Activated CD4-positive, alpha-beta T cell treated with anti-CD3 and anti-CD28 coated beads, Interleukin-2, amount 10 ng/mL, durations not matched to agents 24 days and 14 days (primary cell): ENCODE measurements at regions of chr10 and their contacts with region 1.

Region 1: GRCh38 chr10:119542988-119543813 is 682 bp upstream of the RGS10 start:
- DNase-seq: peak; percentile 89
- H3K4me3 Mint-ChIP-seq: peak overlapping the region; percentile 79
- H3K27ac Mint-ChIP-seq: peak overlapping the region; percentile 91
- H3K4me1 Mint-ChIP-seq: peaks cover 35% of the 10 kb centered on the region
- H3K27me3 Mint-ChIP-seq: peaks cover 20% of the 10 kb centered on the region

Region 2: DNA sequence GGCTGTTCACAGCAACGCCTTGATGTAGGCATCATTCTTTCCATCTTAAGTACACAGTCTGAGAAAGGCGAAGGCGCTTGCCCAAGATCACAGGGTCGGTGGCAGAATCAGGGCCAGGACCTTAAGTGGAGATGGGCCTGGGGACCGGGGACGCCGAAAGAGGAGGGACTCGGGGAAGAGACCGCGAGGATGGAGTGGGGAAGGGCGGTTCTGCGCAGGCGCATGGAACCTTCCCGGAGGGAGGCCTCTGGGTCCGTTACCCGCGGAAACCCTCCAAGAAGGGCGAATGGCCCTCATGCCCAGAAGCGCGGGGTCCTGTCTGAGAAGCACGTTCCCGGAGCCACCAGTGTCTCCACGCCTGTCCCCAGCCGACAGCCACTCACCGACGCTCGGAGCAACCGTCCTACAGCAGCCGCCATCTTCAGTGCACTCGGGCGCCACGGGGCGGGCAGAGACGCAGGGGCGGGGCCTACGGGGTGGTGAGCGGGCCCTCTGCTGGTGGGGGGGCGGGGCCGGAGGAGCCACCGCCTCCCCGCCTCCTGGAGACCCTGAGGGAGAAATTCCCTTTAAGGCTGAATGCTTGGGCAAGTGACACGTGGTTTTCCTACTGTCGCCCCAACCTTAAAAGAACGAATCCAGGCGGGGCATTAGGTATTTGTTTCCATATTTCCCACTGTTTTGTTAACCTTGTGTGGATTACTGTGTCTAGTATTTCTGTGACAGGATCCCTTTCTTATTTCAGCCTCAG is 364.7 kb before region 1 on chr10 and contains the start of gene PRDX3:
- intact Hi-C with region 1: loop called (anchors 5 kb)
- DNase-seq: peak; percentile 98
- H3K4me3 Mint-ChIP-seq: peak within 1 kb of the TSS; percentile 98
- H3K27ac Mint-ChIP-seq: peak within 1 kb of the TSS; percentile 99
- H3K4me1 Mint-ChIP-seq: peaks cover 39% of the 10 kb centered on the region
- H3K27me3 Mint-ChIP-seq: no peaks in the 10 kb centered on the region
- total RNA-seq, gene PRDX3: 179 and 180 TPM in 2 replicates

Region 3: DNA sequence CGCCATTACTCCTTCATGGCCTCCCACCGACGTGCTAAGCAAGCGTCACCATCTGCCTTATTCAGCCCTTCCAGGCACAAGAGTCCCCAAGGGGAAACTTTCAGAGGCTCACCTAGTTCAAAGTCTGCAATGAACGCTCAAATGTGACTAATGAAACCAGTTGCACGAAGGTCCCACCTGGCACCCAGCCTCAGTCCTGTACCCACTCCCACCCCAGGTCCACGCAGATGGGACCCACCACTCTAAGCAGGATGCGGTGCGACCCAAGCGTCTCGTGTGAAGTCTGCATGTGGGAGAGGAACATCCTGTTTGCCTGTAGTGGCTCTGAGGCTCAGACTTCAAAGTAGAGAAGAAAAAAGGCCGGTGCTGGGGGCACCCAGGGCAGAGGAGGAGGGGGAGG is 41.0 kb before region 1 on chr10:
- intact Hi-C with region 1: loop called (anchors 1 kb)
- DNase-seq: peak; percentile 93
- H3K4me3 Mint-ChIP-seq: peak overlapping the region; percentile 72
- H3K27ac Mint-ChIP-seq: peak overlapping the region; percentile 97
- H3K4me1 Mint-ChIP-seq: peaks cover 73% of the 10 kb centered on the region
- H3K27me3 Mint-ChIP-seq: no peaks in the 10 kb centered on the region

Region 4: DNA sequence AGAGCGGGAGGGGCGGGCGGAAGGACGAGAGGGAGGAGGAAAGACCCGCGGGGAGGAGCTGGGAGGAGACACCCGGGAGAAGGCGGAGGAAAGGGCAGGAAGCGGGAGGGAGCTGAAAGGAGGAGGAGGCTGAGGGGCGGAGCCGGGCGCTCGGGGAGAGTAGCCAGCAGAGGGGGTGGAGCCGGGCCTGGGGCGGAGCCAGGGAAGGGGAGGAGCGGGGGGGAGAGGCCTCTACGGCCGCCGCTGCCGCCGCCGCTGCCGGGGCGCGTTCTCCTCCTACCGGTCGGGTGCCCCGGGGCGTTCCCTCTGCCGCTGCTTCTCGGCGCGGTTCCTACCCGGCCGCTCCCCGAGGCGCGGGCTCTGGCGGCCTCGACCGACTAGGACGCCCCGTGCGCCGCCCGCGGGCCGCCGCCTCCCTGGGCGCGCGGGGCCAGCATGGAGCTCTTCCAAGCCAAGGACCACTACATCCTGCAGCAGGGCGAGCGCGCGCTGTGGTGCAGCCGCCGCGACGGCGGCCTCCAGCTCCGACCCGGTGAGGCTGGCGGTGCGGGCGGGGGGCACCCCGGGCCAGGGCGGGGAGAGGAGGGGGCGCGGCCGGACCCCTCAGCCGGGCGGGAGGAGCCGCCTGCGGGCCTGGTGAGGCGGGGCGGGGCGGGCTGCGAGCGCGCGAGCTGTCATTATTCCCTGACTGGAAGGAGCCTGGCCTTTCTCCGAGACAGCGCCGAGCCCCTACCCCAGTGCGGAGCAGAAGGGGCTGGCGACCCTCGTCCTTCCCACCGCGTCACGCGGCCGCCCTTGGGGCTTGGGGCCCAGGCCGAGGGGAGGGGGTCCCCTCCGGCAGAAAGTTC is 182.9 kb after region 1 on chr10 and contains the start of gene INPP5F:
- intact Hi-C with region 1: loop called (anchors 10 kb)
- DNase-seq: peak; percentile 100
- H3K4me3 Mint-ChIP-seq: peak within 1 kb of the TSS; percentile 91
- H3K27ac Mint-ChIP-seq: peak within 1 kb of the TSS; percentile 86
- H3K4me1 Mint-ChIP-seq: peaks cover 37% of the 10 kb centered on the region
- H3K27me3 Mint-ChIP-seq: no peaks in the 10 kb centered on the region
- total RNA-seq, gene INPP5F: 18.1 and 18.3 TPM in 2 replicates

Region 5: DNA sequence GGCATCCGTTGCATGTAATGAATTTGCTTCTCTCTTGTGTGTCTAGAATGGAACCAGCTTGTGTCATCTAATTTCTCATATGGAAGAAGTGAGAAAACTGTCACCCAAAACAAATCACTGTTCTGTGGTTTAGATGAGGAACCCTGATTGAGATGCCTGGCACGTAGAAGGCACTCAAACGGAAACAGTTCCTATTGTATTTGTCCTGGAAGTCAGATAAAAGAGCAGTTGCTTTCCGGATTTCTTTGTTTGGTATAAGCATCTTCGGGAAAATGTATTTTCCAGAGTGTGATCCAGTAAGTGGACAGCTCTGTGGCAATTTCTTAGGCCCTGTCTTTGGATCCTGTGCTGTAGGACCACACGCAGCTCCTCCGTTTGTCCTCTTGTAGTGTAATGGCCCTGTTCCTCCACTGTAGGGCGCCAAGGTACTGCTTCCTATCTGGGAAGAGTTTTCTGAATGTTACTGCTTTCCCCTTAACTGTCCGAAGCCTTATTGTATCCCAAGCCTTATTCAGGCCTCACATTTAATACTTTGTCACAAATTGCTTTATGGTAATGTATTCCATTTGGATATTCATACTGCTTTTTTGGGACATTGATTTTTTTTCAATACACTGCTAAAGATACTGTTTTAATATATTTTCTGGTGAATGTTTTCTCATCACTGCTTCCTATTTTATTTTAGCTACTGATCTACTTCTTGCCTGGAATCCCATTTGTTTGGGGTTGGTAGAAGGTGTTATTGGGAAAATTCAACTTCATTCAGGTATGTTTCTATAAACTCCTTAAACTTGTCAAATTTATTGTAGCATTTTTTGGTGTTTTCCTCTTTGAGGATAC is 207.4 kb after region 1 on chr10:
- intact Hi-C with region 1: no loop called
- DNase-seq: peak; percentile 87
- H3K4me3 Mint-ChIP-seq: no peak overlapping the region
- H3K27ac Mint-ChIP-seq: no peak overlapping the region
- H3K4me1 Mint-ChIP-seq: peaks cover 2% of the 10 kb centered on the region
- H3K27me3 Mint-ChIP-seq: no peaks in the 10 kb centered on the region